ENCODE measurements at regions of chr19 and their contacts with region 1.

Region 1: DNA sequence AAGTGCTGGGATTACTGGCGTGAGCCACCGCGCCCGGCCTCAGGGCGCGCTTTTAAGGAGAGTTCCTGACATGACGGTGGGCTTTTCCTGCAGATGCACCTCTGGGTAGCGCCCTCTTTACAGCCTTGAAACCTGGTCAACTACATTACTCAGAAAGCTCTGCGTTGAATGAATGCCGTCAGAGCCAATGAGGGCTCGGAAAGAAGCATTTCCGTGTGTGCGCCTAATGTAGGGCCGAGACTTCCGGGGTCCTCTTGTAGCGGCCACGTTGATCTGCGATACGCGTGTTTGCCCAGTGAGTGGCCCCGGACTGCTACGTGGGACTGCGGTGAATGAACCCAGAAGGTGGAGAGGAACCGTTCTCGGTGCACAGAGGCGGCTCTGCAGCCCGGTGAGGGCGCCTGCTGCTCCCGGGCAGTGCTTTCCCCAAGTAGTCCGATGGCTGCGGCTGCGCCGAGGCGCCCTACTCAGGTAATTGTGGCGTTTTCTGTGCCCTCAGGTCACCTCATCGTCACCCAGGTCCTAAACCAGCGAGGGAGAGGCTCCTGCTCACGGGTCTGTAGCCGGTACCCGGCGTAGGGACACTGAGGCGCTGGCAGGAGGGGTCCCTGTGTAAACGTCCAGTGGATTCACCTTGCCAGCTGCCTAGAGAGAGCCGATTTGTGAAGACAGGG is 4.9 kb upstream of the ZNF552 start:
- DNase-seq: peak; percentile 84 to 90
- H3K4me3 ChIP-seq: peak overlapping the region; percentile 70 to 73
- H3K27ac ChIP-seq: peak overlapping the region; percentile 76 to 82
- H3K4me1 ChIP-seq: peaks cover 0 to 26% (median 13%) of the 10 kb centered on the region in 4 donors
- H3K27me3 ChIP-seq: no peaks in the 10 kb centered on the region
- CTCF ChIP-seq: no peak

Region 2: GRCh38 chr19:57746580-57747471 is 72.8 kb before region 1 on chr19 and contains the start of gene ZNF776:
- intact Hi-C with region 1: loop called (anchors 10 kb)
- DNase-seq: peak; percentile 82 to 84
- H3K4me3 ChIP-seq: peak within 1 kb of the TSS; percentile 70 to 95
- H3K27ac ChIP-seq: peak within 1 kb of the TSS; percentile 62 to 74
- H3K4me1 ChIP-seq: peaks cover 0 to 13% (median 7%) of the 10 kb centered on the region in 4 donors
- H3K27me3 ChIP-seq: no peaks in the 10 kb centered on the region
- CTCF ChIP-seq: peak in 1 of 2 experiments; percentile 24